PC-3 (cell line): ENCODE measurements at regions of chr2 and their contacts with region 1.

Region 1: GRCh38 chr2:222969491-222969890 is 82.5 kb upstream of the KCNE4 start:
- DNase-seq: peak; percentile 53
- ATAC-seq: no peak
- H3K4me3 ChIP-seq: no peak overlapping the region
- H3K27ac ChIP-seq: no peak overlapping the region
- H3K4me1 ChIP-seq: peaks cover 19% of the 10 kb centered on the region
- H3K27me3 ChIP-seq: no peaks in the 10 kb centered on the region
- CTCF ChIP-seq: no peak

Region 2: DNA sequence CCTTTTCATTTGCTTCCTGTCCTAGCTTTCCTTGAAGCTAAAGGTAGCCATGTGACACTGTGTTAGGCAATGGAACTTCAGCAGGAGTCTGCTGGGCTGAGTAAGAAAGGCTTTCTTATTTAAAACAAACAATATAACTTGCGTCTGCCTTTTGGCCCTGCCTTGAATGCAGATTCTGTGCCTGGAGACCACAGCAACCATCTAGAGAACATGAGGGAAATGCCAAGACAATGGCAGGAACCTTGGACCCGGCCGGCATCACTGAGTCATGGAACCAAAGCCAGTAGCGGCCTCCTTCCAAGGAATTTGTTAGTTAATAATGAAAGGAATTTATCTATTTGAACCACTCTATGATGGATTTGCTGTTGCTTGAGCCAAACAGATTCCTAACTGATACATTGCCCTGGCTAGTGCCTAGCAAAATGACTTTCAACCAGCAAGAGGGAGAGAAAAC is 1189.8 kb before region 1 on chr2:
- CTCF ChIA-PET with region 1: no interaction called
- POLR2A ChIA-PET with region 1: no interaction called
- intact Hi-C with region 1: no loop called
- DNase-seq: no peak
- ATAC-seq: no peak
- H3K4me3 ChIP-seq: no peak overlapping the region
- H3K27ac ChIP-seq: no peak overlapping the region
- H3K4me1 ChIP-seq: peaks cover 6% of the 10 kb centered on the region; the same call in 1 of the 2 replicates
- H3K27me3 ChIP-seq: peaks cover 8% of the 10 kb centered on the region
- CTCF ChIP-seq: no peak

Region 3: DNA sequence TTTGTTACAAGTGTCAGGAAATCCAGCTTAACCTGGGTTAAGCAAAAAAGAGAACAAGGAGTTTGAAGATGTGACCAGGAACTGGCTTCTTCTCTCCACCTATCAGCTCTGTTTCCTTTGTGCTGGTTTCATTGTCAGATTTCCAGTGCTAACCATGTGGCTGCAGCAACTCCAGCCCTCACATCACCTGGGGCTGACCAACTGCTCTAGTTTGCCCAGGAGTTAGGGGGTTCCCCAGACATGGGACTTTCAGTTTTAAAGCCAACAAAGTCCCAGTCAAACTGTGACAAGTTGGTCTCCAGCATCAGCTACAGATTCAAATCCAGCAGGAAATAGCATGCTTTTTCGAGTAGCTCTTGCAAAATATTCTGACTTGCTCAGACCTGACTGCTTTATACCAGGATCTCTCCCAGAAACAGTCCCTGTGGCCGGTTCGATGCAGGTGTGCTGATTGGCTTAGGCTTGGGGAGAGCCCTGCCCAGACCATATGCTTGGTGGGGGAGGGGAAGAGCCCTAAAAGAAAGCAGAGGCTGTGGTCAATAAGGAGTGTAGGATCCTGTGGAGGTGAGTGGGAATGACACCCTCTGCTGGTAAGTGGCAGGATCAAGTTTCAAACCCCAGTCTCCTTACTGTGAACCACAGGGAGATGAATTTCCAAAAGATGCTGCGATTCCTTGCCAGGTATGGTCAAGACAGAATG is 132.0 kb after region 1 on chr2:
- CTCF ChIA-PET with region 1: interaction called, 11 read pairs
- POLR2A ChIA-PET with region 1: no interaction called
- intact Hi-C with region 1: loop called (anchors 1 kb)
- DNase-seq: peak; percentile 61
- ATAC-seq: peak; percentile 96
- H3K4me3 ChIP-seq: no peak overlapping the region
- H3K27ac ChIP-seq: no peak overlapping the region
- H3K4me1 ChIP-seq: no peaks in the 10 kb centered on the region
- H3K27me3 ChIP-seq: peaks cover 14% of the 10 kb centered on the region; the same call in 1 of the 2 replicates
- CTCF ChIP-seq: peak; percentile 76

Region 4: DNA sequence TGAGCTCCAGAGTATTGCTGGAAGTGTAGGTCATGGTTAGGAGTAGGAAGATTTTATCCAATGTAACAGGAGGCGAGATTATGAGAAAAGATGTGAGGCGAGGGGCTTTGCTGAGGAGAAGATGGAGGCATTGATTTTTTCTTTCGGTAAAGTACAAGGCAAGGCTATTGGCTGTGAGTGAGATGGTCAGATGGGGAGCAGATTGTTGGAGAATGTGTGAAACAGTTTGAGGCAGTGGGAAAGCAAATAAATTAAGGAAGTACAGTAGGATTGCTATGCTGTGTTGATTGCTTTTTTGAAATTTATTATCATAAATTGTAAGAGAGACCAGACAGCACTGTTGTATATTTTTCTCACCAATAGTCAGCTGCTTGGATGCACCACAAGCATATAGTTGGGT is 255.8 kb after region 1 on chr2:
- CTCF ChIA-PET with region 1: no interaction called
- POLR2A ChIA-PET with region 1: no interaction called
- intact Hi-C with region 1: loop called (anchors 2 kb)
- DNase-seq: no peak
- ATAC-seq: no peak
- H3K4me3 ChIP-seq: no peak overlapping the region
- H3K27ac ChIP-seq: no peak overlapping the region
- H3K4me1 ChIP-seq: peaks cover 13% of the 10 kb centered on the region
- H3K27me3 ChIP-seq: peaks cover 6% of the 10 kb centered on the region; the same call in 1 of the 2 replicates
- CTCF ChIP-seq: no peak

Region 5: GRCh38 chr2:223383315-223383714 is 413.8 kb after region 1 on chr2:
- CTCF ChIA-PET with region 1: no interaction called
- POLR2A ChIA-PET with region 1: no interaction called
- intact Hi-C with region 1: loop called (anchors 2 kb)
- DNase-seq: no peak
- ATAC-seq: no peak
- H3K4me3 ChIP-seq: no peak overlapping the region
- H3K27ac ChIP-seq: no peak overlapping the region
- H3K4me1 ChIP-seq: no peaks in the 10 kb centered on the region
- H3K27me3 ChIP-seq: peaks cover 44% of the 10 kb centered on the region
- CTCF ChIP-seq: no peak